Right lobe of liver (tissue), 6 donors: ENCODE measurements at regions of chr19 and their contacts with region 1.

Region 1: GRCh38 chr19:2488942-2489731 is 13.2 kb downstream of the GADD45B start:
- DNase-seq: peak; percentile 67 to 79 (median 79)
- ATAC-seq: peak; percentile 62 to 86 (median 80)
- H3K4me3 ChIP-seq: peak overlapping the region; percentile 26 to 48 (median 45)
- H3K27ac ChIP-seq: peak overlapping the region in 1 of 3 donors; percentile 24
- H3K4me1 ChIP-seq: peaks cover 0 to 21% (median 4%) of the 10 kb centered on the region in 4 donors
- H3K27me3 ChIP-seq: no peaks in the 10 kb centered on the region
- CTCF ChIP-seq: no peak
- POLR2A ChIP-seq: no peak

Region 2: GRCh38 chr19:2532252-2533071 is 43.3 kb after region 1 on chr19:
- intact Hi-C with region 1: loop called in 1 of 2 experiments (anchors 10 kb)
- DNase-seq: no peak
- ATAC-seq: no peak
- H3K4me3 ChIP-seq: no peak overlapping the region
- H3K27ac ChIP-seq: no peak overlapping the region
- H3K4me1 ChIP-seq: peaks cover 0 to 19% (median 0%) of the 10 kb centered on the region in 4 donors
- H3K27me3 ChIP-seq: no peaks in the 10 kb centered on the region
- CTCF ChIP-seq: no peak
- POLR2A ChIP-seq: no peak

Region 3: DNA sequence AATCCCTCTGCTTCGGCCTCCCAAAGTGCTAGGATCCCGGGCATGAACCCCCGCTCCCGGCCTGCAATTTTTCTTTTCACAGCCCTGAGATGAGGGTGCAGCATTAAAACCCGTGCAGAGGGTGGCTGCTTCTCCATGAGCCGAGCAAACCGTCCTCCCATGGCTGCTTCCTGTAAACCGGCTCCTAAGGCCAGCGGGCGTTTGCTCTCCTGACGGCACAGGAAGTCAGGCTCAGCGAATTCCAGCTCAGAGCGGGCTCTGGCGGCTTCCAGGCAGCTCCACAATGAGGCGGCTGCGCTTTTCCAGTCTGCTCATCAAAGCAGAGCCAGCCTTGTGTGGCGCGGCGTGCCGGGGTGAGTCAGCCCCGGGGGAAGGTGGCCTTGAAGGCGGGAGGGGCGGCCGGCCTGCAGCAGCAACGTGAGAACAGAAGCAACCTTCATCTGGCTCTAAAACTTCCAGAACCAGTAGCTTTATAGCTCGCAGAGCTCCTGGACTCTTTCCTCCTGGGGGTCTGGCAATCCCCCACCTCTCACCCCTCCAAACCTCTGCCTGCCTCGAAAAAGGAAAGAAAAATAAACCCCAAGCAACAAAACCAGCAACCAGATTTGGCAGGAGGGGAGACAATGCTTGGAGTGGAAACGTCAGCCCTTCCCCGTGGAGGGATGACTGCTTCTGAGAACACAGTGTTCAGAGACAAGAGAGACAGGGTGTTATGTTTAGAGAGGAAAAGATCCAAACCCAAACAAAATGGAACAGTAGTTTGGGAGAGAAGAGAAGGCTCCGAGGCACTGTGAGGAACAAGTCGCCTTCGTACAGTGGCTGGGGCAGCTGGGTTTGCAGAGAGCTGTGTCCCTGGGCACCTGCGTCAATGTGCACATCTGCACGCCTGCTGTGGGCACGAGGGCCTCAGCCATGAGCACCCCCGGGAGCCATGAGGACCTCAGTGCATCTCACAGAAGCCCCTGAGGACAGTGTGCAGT is 54.6 kb after region 1 on chr19:
- intact Hi-C with region 1: loop called (anchors 5 to 10 kb)
- DNase-seq: peak; percentile 85 to 92 (median 89)
- ATAC-seq: peak; percentile 51 to 62 (median 60)
- H3K4me3 ChIP-seq: peak overlapping the region in 2 of 3 donors; percentile 20
- H3K27ac ChIP-seq: peak overlapping the region; percentile 53 to 98 (median 93)
- H3K4me1 ChIP-seq: peaks cover 0 to 61% (median 31%) of the 10 kb centered on the region in 4 donors
- H3K27me3 ChIP-seq: no peaks in the 10 kb centered on the region
- CTCF ChIP-seq: peak in 2 of 4 donors; percentile 15 to 29
- POLR2A ChIP-seq: peak; percentile 95